Kidney (tissue), 22 donors: ENCODE measurements at regions of chr18 and their contacts with region 1.

Region 1: DNA sequence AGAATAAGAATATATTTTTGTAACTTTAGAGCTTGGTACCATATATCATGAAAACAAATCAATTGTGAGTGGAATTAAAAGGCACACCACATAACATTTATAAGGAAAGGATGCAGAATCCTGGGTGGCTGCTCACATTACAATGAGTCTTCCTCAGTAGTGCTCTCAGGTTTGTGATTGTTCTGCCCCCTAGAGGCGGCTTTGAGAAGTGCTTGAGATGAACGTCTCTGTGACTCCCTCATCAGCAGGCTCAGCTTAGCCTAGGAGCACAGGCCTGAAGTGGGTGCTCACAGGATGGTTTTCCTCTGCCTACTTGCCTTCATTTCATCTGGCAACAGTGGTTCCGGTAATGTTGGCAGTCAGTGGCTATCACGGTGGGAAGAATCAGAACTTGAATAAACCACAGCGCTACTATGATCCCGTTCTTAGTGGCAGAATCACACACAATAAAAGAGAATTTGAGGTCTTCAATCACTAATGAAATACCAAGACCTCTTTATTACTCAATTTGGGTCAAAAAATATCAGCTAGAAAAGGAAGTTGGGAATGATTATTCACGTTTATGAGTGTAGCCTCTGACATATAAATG is 38.1 kb upstream of the B4GALT6 start:
- DNase-seq: peak in 4 of 5 donors; percentile 80 to 91 (median 84)
- H3K4me3 ChIP-seq: no peak overlapping the region
- H3K27ac ChIP-seq: no peak overlapping the region
- H3K4me1 ChIP-seq: peaks cover 0 to 9% (median 0%) of the 10 kb centered on the region in 3 donors
- H3K27me3 ChIP-seq: no peaks in the 10 kb centered on the region
- CTCF ChIP-seq: peak; percentile 89

Region 2: GRCh38 chr18:31563778-31564177 is 158.7 kb before region 1 on chr18:
- intact Hi-C with region 1: loop called (anchors 5 kb)
- DNase-seq: no peak
- H3K4me3 ChIP-seq: no peak overlapping the region
- H3K27ac ChIP-seq: no peak overlapping the region
- H3K4me1 ChIP-seq: peaks cover 0 to 28% (median 3%) of the 10 kb centered on the region in 3 donors
- H3K27me3 ChIP-seq: no peaks in the 10 kb centered on the region
- CTCF ChIP-seq: no peak

Region 3: GRCh38 chr18:31825772-31826171 is 103.3 kb after region 1 on chr18:
- intact Hi-C with region 1: no loop called
- DNase-seq: no peak
- H3K4me3 ChIP-seq: no peak overlapping the region
- H3K27ac ChIP-seq: no peak overlapping the region
- H3K4me1 ChIP-seq: no peaks in the 10 kb centered on the region
- H3K27me3 ChIP-seq: no peaks in the 10 kb centered on the region
- CTCF ChIP-seq: no peak

Region 4: DNA sequence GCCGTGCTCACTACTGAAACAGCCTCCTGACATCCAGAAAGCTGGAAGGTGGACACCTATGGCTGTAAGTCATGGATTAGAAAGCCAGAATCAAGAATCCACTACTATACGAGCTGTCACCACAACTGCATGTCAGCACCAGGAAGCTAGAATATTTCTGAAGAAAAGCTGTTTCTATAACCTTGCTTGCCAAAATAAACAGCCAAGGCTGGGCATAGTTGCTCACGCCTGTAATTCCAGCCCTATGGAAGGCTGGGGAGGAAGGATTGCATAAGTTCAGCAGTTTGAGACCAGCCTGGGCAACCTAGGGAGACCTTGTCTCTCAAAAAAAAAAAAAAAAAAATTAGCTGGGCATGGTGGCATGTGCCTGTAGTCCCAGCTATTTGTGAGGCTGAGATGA is 844.5 kb after region 1 on chr18:
- intact Hi-C with region 1: no loop called
- DNase-seq: no peak
- H3K4me3 ChIP-seq: no peak overlapping the region
- H3K27ac ChIP-seq: no peak overlapping the region
- H3K4me1 ChIP-seq: no peaks in the 10 kb centered on the region
- H3K27me3 ChIP-seq: no peaks in the 10 kb centered on the region
- CTCF ChIP-seq: no peak